Endothelial cell of umbilical vein (primary cell): ENCODE measurements at regions of chr11 and their contacts with region 1.

Region 1: GRCh38 chr11:114400217-114400914 is at the starts of genes C11orf71 and RBM7:
- DNase-seq: peak; percentile 99
- H3K4me3 ChIP-seq: peak within 1 kb of the TSS; percentile 66 to 84 (median 79)
- H3K27ac ChIP-seq: peak within 1 kb of the TSS; percentile 86
- H3K4me1 ChIP-seq: peaks cover 27% of the 10 kb centered on the region
- H3K27me3 ChIP-seq: no peaks in the 10 kb centered on the region
- CTCF ChIP-seq: no peak
- POLR2A ChIP-seq: peak; percentile 98
- total RNA-seq, gene C11orf71: 4.0 and 5.4 TPM in 2 replicates
- total RNA-seq, gene RBM7: 31.3 and 38.4 TPM in 2 replicates

Region 2: GRCh38 chr11:113773416-113774173 is 626.8 kb before region 1 on chr11 and contains the start of gene ZW10:
- CTCF ChIA-PET with region 1: no interaction called
- POLR2A ChIA-PET with region 1: no interaction called
- dilution Hi-C with region 1: no loop called
- intact Hi-C with region 1: loop called (anchors 5 kb)
- DNase-seq: peak; percentile 99
- H3K4me3 ChIP-seq: peak within 1 kb of the TSS; percentile 61 to 97 (median 87)
- H3K27ac ChIP-seq: peak within 1 kb of the TSS; percentile 75
- H3K4me1 ChIP-seq: peaks cover 6% of the 10 kb centered on the region
- H3K27me3 ChIP-seq: peaks cover 11 to 22% of the 10 kb centered on the region in 2 experiments
- CTCF ChIP-seq: peak; percentile 67 to 75
- POLR2A ChIP-seq: peak; percentile 71
- total RNA-seq, gene ZW10: 22.1 and 22.9 TPM in 2 replicates

Region 3: DNA sequence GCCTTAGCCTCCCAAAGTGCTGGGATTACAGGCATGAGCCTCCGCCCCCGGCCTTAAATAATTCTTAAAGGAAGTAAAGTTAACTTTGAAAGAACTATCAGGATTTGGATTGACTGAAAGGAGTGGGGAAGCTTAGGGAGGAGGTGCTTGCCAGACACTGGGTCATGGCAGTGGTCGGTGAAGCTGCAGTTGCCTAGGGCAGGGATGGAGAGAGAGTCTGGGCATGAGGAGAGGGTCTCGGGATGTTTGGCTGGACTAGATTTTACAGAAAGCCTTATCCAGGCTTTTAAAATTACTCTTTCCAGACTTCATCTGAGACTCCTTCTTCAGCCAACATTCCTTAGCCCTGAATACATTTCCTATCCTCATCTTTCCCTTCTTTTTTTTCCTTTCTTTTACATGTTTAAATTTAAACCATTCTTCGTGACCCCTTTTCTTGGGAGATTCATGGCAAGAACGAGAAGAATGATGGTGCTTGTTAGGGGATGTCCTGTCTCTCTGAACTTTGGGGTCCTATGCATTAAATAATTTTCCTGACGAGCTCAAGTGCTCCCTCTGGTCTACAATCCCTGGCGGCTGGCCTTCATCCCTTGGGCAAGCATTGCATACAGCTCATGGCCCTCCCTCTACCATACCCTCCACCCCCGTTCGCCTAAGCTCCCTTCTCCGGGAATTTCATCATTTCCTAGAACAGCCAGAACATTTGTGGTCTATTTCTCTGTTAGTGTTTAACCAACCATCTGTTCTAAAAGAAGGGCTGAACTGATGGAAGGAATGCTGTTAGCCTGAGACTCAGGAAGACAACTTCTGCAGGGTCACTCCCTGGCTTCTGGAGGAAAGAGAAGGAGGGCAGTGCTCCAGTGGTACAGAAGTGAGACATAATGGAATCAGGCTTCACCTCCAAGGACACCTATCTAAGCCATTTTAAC is 104.4 kb before region 1 on chr11 and contains the start of gene NNMT:
- CTCF ChIA-PET with region 1: no interaction called
- POLR2A ChIA-PET with region 1: interaction called, 3 read pairs
- dilution Hi-C with region 1: no loop called
- intact Hi-C with region 1: loop called (anchors 1 kb)
- DNase-seq: peak; percentile 97
- H3K4me3 ChIP-seq: peak within 1 kb of the TSS; percentile 85 to 99 (median 96)
- H3K27ac ChIP-seq: peak within 1 kb of the TSS; percentile 100
- H3K4me1 ChIP-seq: peaks cover 70% of the 10 kb centered on the region
- H3K27me3 ChIP-seq: no peaks in the 10 kb centered on the region
- CTCF ChIP-seq: peak in 1 of 2 donors; percentile 11
- POLR2A ChIP-seq: peak; percentile 86
- total RNA-seq, gene NNMT: 300 and 330 TPM in 2 replicates

Region 4: GRCh38 chr11:114354076-114354475 is 46.3 kb before region 1 on chr11:
- CTCF ChIA-PET with region 1: interaction called, 22 read pairs
- POLR2A ChIA-PET with region 1: no interaction called
- dilution Hi-C with region 1: no loop called
- intact Hi-C with region 1: loop called (anchors 1 kb)
- DNase-seq: peak; percentile 87
- H3K4me3 ChIP-seq: no peak overlapping the region
- H3K27ac ChIP-seq: no peak overlapping the region
- H3K4me1 ChIP-seq: peaks cover 7% of the 10 kb centered on the region
- H3K27me3 ChIP-seq: no peaks in the 10 kb centered on the region
- CTCF ChIP-seq: no peak
- POLR2A ChIP-seq: peak; percentile 34

Region 5: GRCh38 chr11:114439229-114440120 is 39.1 kb after region 1 on chr11 and contains the start of gene REXO2:
- CTCF ChIA-PET with region 1: interaction called, 3 read pairs
- POLR2A ChIA-PET with region 1: interaction called, 4 read pairs
- dilution Hi-C with region 1: no loop called
- intact Hi-C with region 1: loop called (anchors 1 kb)
- DNase-seq: peak; percentile 96
- H3K4me3 ChIP-seq: peak within 1 kb of the TSS; percentile 49 to 97 (median 83)
- H3K27ac ChIP-seq: peak within 1 kb of the TSS; percentile 36
- H3K4me1 ChIP-seq: peaks cover 23% of the 10 kb centered on the region
- H3K27me3 ChIP-seq: no peaks in the 10 kb centered on the region
- CTCF ChIP-seq: peak in 1 of 2 donors; percentile 43
- POLR2A ChIP-seq: peak; percentile 83
- total RNA-seq, gene REXO2: 155 and 182 TPM in 2 replicates